Mammary epithelial cell (primary cell): ENCODE measurements at regions of chr4 and their contacts with region 1.

Region 1: DNA sequence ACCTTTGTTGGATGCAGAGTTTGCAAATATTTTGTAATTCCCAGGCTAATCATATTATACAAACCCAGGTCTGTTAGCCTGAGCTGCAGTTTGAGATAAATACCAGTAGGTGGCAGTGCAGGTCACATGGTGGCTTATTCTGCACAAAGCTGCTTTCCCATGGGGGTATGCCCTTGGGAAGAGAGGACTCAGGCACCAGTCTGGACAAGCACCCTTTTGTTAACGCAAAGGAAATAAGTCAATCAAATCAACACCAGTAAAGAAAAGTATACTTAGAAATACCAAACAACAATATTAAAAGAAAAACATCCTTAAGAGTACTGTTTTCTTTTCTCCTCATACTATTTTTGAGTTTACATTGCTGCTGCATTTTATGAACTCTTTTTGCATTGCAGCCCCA is 389.0 kb upstream of the ZFP42 start:
- DNase-seq: peak; percentile 57
- H3K4me3 ChIP-seq: no peak overlapping the region
- H3K27ac ChIP-seq: no peak overlapping the region
- H3K4me1 ChIP-seq: peaks cover 16% of the 10 kb centered on the region
- H3K27me3 ChIP-seq: no peaks in the 10 kb centered on the region
- CTCF ChIP-seq: peak; percentile 87 to 89

Region 2: DNA sequence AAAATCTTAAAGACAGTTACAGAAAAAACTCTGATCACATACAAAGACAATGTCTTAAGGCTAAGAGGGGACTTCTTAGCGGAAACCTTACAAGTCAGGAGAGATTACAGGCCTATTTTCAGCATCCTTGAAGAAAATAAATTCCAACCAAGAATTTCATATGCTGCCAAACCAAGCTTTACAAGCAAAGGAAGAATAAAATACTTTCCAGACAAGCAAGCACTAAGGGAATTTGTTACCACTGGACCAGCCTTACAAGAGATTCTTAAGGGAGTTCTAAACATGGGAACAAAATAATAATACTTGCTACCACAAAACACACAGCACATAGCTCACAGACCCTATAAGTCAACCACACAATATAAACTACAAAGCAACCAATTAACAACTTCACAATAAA is 133.2 kb after region 1 on chr4:
- CTCF ChIA-PET with region 1: no interaction called
- dilution Hi-C with region 1: no loop called
- in situ Hi-C with region 1: no loop called
- intact Hi-C with region 1: loop called (anchors 1 kb)
- DNase-seq: no peak
- H3K4me3 ChIP-seq: no peak overlapping the region
- H3K27ac ChIP-seq: no peak overlapping the region
- H3K4me1 ChIP-seq: no peaks in the 10 kb centered on the region
- H3K27me3 ChIP-seq: no peaks in the 10 kb centered on the region
- CTCF ChIP-seq: no peak

Region 3: GRCh38 chr4:188372826-188373225 is 766.2 kb after region 1 on chr4:
- CTCF ChIA-PET with region 1: no interaction called
- dilution Hi-C with region 1: no loop called
- in situ Hi-C with region 1: no loop called
- intact Hi-C with region 1: loop called (anchors 2 kb)
- DNase-seq: peak; percentile 29
- H3K4me3 ChIP-seq: no peak overlapping the region
- H3K27ac ChIP-seq: no peak overlapping the region
- H3K4me1 ChIP-seq: peaks cover 6% of the 10 kb centered on the region
- H3K27me3 ChIP-seq: no peaks in the 10 kb centered on the region
- CTCF ChIP-seq: no peak